T-cell (primary cell): ENCODE measurements at regions of chr13 and their contacts with region 1.

Region 1: GRCh38 chr13:86792153-86792651 is 879.0 kb upstream of the SLITRK5 start:
- DNase-seq: no peak
- ATAC-seq: no peak
- H3K4me3 ChIP-seq: no peak overlapping the region
- H3K4me3 Mint-ChIP-seq: no peak overlapping the region
- H3K27ac ChIP-seq: no peak overlapping the region
- H3K27ac Mint-ChIP-seq: no peak overlapping the region
- H3K4me1 ChIP-seq: no peaks in the 10 kb centered on the region
- H3K4me1 Mint-ChIP-seq: no peaks in the 10 kb centered on the region
- H3K27me3 ChIP-seq: no peaks in the 10 kb centered on the region
- H3K27me3 Mint-ChIP-seq: no peaks in the 10 kb centered on the region

Region 2: DNA sequence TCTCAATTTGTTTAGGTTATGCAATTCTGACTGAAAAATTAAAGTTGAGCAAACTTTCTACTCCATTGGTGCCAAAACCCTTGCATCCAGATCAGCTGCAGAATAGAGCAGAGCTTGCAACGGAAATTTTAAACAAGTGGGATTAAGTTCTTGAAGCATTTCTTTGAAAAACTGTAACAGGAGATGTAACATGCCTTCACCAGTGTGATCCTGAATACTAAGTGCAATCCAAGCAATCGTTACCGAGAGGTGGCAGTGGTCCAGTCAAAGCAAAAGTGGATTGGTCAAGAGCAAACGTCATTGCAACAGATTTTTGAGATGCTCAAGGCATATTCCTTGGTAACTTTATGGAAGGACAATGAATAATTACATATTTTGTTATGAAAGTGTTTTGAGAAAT is 37.8 kb after region 1 on chr13:
- CTCF ChIA-PET with region 1: no interaction called
- POLR2A ChIA-PET with region 1: no interaction called
- DNase-seq: no peak
- ATAC-seq: no peak
- H3K4me3 ChIP-seq: no peak overlapping the region
- H3K4me3 Mint-ChIP-seq: no peak overlapping the region
- H3K27ac ChIP-seq: no peak overlapping the region
- H3K27ac Mint-ChIP-seq: no peak overlapping the region
- H3K4me1 ChIP-seq: no peaks in the 10 kb centered on the region
- H3K4me1 Mint-ChIP-seq: no peaks in the 10 kb centered on the region
- H3K27me3 ChIP-seq: no peaks in the 10 kb centered on the region
- H3K27me3 Mint-ChIP-seq: no peaks in the 10 kb centered on the region

Region 3: DNA sequence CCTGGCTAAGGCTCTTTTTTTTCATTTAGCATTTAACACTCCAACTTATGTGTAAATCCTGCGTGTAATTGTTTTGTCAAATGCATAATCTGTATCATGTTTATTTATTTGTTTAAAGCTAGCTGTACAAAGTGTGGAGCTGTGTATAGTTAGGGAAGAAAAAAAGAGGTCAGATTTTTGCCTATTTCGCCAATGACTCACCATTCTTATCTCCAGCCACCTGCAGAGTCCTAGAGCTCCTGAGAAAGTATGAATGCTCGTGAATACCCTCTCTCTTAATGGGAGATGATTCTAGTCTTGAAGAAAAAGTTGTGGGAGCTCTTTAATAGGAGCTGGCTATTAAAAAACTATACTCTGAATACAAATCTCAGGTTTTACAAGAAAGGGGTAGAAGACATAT is 100.1 kb after region 1 on chr13:
- CTCF ChIA-PET with region 1: no interaction called
- POLR2A ChIA-PET with region 1: interaction called in 1 of 2 experiments, 13 read pairs
- DNase-seq: no peak
- ATAC-seq: no peak
- H3K4me3 ChIP-seq: no peak overlapping the region
- H3K4me3 Mint-ChIP-seq: no peak overlapping the region
- H3K27ac ChIP-seq: no peak overlapping the region
- H3K27ac Mint-ChIP-seq: no peak overlapping the region
- H3K4me1 ChIP-seq: no peaks in the 10 kb centered on the region
- H3K4me1 Mint-ChIP-seq: no peaks in the 10 kb centered on the region
- H3K27me3 ChIP-seq: no peaks in the 10 kb centered on the region
- H3K27me3 Mint-ChIP-seq: no peaks in the 10 kb centered on the region